CD4-positive, alpha-beta T cell (primary cell): ENCODE measurements at regions of chr6 and their contacts with region 1.

Region 1: GRCh38 chr6:69796642-69797390 is at the start of gene LMBRD1:
- DNase-seq: peak; percentile 98 to 100 (median 99)
- ATAC-seq: peak; percentile 80
- H3K4me3 ChIP-seq: peak within 1 kb of the TSS; percentile 68
- H3K4me3 Mint-ChIP-seq: peak within 1 kb of the TSS; percentile 91
- H3K27ac ChIP-seq: peak within 1 kb of the TSS; percentile 92
- H3K27ac Mint-ChIP-seq: peak within 1 kb of the TSS; percentile 91
- H3K4me1 ChIP-seq: peaks cover 17% of the 10 kb centered on the region
- H3K4me1 Mint-ChIP-seq: peaks cover 57% of the 10 kb centered on the region
- H3K27me3 ChIP-seq: no peaks in the 10 kb centered on the region
- H3K27me3 Mint-ChIP-seq: no peaks in the 10 kb centered on the region
- CTCF ChIP-seq: peak; percentile 94
- total RNA-seq, gene LMBRD1: 40.3 to 42.0 TPM

Region 2: GRCh38 chr6:69732640-69733039 is 64.2 kb before region 1 on chr6:
- CTCF ChIA-PET with region 1: no interaction called
- POLR2A ChIA-PET with region 1: interaction called, 4 read pairs
- intact Hi-C with region 1: loop called in 1 of 2 experiments (anchors 5 kb)
- DNase-seq: peak in 3 of 14 experiments; percentile 23 to 33 (median 29)
- ATAC-seq: no peak
- H3K4me3 ChIP-seq: no peak overlapping the region
- H3K4me3 Mint-ChIP-seq: no peak overlapping the region
- H3K27ac ChIP-seq: no peak overlapping the region
- H3K27ac Mint-ChIP-seq: no peak overlapping the region
- H3K4me1 ChIP-seq: no peaks in the 10 kb centered on the region
- H3K4me1 Mint-ChIP-seq: peaks cover 10% of the 10 kb centered on the region
- H3K27me3 ChIP-seq: no peaks in the 10 kb centered on the region
- H3K27me3 Mint-ChIP-seq: no peaks in the 10 kb centered on the region
- CTCF ChIP-seq: no peak

Region 3: GRCh38 chr6:69813508-69813907 is 16.7 kb after region 1 on chr6:
- CTCF ChIA-PET with region 1: interaction called, 39 read pairs
- POLR2A ChIA-PET with region 1: interaction called, 74 read pairs
- intact Hi-C with region 1: loop called in 1 of 2 experiments (anchors 2 kb)
- DNase-seq: peak in 3 of 14 experiments; percentile 33 to 52 (median 35)
- ATAC-seq: peak; percentile 44
- H3K4me3 ChIP-seq: no peak overlapping the region
- H3K4me3 Mint-ChIP-seq: peak overlapping the region; percentile 16
- H3K27ac ChIP-seq: peak overlapping the region; percentile 51 to 77
- H3K27ac Mint-ChIP-seq: peak overlapping the region; percentile 78
- H3K4me1 ChIP-seq: peaks cover 32% of the 10 kb centered on the region
- H3K4me1 Mint-ChIP-seq: peaks cover 62% of the 10 kb centered on the region
- H3K27me3 ChIP-seq: no peaks in the 10 kb centered on the region
- H3K27me3 Mint-ChIP-seq: no peaks in the 10 kb centered on the region
- CTCF ChIP-seq: no peak

Region 4: DNA sequence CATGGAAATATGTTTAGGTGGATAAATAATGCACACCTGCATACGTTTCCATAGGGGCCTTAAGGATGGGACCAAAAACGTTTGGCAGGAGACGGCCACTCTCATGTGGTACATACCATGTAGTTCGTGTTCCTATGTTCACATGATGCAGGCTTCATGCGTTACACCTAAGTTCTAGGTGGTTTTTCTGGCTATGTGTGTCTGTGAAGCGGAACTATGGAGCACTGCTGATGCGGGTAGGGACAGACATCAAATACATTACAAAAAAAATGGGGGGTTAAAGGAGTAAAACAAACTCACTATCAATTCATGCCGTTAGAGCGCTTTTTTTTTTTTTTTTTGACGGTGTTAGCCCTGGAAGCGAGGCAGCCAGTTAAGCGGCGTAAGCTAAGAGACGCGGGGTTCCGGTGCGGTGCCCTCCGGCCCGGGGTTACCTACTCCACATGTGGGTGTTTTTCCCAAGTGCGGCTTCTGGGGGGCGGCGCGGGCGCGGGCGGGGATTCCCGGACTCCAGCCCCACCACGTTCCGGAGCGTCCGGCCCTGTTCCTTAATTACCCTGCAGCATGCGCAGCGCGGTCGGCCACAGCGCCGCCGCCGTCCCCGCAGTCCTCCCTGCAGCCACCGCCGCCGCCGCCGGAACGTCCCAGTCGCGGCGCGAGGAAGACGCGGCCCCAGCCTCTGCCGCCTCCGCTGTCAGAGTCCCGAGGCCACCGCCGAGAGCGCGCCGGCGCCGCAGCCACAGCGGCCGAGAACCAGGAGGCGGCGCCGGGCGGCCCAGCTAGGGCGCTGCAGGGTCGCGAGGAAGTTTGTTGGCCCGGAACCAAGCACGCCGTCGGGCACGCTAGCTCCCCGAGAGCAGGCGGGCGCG is 70.2 kb after region 1 on chr6:
- CTCF ChIA-PET with region 1: interaction called, 7 read pairs
- POLR2A ChIA-PET with region 1: interaction called, 12 read pairs
- intact Hi-C with region 1: no loop called
- DNase-seq: peak; percentile 15 to 81 (median 56)
- ATAC-seq: peak; percentile 77
- H3K4me3 ChIP-seq: peak overlapping the region; percentile 61
- H3K4me3 Mint-ChIP-seq: peak overlapping the region; percentile 89
- H3K27ac ChIP-seq: no peak overlapping the region
- H3K27ac Mint-ChIP-seq: no peak overlapping the region
- H3K4me1 ChIP-seq: peaks cover 13% of the 10 kb centered on the region
- H3K4me1 Mint-ChIP-seq: peaks cover 13% of the 10 kb centered on the region
- H3K27me3 ChIP-seq: no peaks in the 10 kb centered on the region
- H3K27me3 Mint-ChIP-seq: peaks cover 64% of the 10 kb centered on the region
- CTCF ChIP-seq: no peak

Region 5: GRCh38 chr6:70566751-70567382 is 770.1 kb after region 1 on chr6 and contains the start of gene SDHAF4:
- CTCF ChIA-PET with region 1: no interaction called
- POLR2A ChIA-PET with region 1: no interaction called
- intact Hi-C with region 1: loop called (anchors 5 to 10 kb)
- DNase-seq: peak; percentile 90 to 96 (median 93)
- ATAC-seq: peak; percentile 99
- H3K4me3 ChIP-seq: peak within 1 kb of the TSS; percentile 95
- H3K4me3 Mint-ChIP-seq: peak within 1 kb of the TSS; percentile 87
- H3K27ac ChIP-seq: peak within 1 kb of the TSS; percentile 67 to 75
- H3K27ac Mint-ChIP-seq: peak within 1 kb of the TSS; percentile 79
- H3K4me1 ChIP-seq: peaks cover 18% of the 10 kb centered on the region
- H3K4me1 Mint-ChIP-seq: peaks cover 22% of the 10 kb centered on the region
- H3K27me3 ChIP-seq: no peaks in the 10 kb centered on the region
- H3K27me3 Mint-ChIP-seq: no peaks in the 10 kb centered on the region
- CTCF ChIP-seq: no peak
- total RNA-seq, gene SDHAF4: 2.2 to 2.6 TPM

Region 6: DNA sequence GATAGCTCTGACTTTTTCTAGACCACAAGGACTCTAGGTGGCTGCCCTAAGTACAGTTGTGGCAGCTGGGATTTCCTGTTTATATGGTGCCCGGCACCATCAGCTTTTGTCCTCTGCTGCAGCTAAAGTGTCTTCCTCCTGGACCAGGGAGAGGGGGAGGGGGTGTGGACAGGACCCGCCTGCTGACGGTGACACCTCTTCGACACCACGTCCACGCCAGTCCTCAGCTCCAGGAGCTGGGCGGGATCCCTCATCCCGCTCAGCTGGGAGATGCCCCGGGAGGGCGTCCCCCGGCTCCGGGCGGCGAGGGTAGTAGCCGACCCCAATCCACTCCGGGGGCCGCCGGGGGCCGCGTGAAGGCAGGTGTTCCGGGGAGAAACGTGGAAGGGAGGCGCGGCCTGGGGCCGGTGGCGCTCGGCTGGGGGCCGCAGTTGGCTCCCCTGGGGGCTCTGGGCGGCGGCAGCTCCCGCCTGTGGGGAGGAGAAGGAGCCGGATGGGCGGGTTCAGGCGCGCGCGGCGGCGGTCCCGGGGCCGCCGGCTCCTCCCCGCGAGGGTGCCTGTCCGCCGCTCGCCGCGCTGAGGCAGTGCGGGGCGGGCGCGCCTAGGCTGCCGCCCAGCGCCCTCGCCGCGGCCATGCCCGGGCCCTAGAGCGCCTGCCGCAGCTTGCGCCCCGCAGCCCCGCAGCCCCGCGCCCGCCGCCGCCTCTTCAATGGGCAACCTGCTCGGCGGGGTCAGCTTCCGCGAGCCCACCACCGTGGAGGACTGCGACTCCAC is 1491.6 kb after region 1 on chr6 and contains the start of gene OGFRL1:
- CTCF ChIA-PET with region 1: no interaction called
- POLR2A ChIA-PET with region 1: interaction called, 5 read pairs
- intact Hi-C with region 1: loop called in 1 of 2 experiments (anchors 5 kb)
- DNase-seq: peak; percentile 35 to 88 (median 60)
- ATAC-seq: peak; percentile 89
- H3K4me3 ChIP-seq: peak within 1 kb of the TSS; percentile 79
- H3K4me3 Mint-ChIP-seq: peak within 1 kb of the TSS; percentile 92
- H3K27ac ChIP-seq: peak within 1 kb of the TSS; percentile 61 to 76
- H3K27ac Mint-ChIP-seq: peak within 1 kb of the TSS; percentile 77
- H3K4me1 ChIP-seq: peaks cover 28% of the 10 kb centered on the region
- H3K4me1 Mint-ChIP-seq: peaks cover 42% of the 10 kb centered on the region
- H3K27me3 ChIP-seq: no peaks in the 10 kb centered on the region
- H3K27me3 Mint-ChIP-seq: no peaks in the 10 kb centered on the region
- CTCF ChIP-seq: no peak
- total RNA-seq, gene OGFRL1: 9.1 TPM